Psoas muscle (tissue), 8 donors: ENCODE measurements at regions of chr3 and their contacts with region 1.

Region 1: DNA sequence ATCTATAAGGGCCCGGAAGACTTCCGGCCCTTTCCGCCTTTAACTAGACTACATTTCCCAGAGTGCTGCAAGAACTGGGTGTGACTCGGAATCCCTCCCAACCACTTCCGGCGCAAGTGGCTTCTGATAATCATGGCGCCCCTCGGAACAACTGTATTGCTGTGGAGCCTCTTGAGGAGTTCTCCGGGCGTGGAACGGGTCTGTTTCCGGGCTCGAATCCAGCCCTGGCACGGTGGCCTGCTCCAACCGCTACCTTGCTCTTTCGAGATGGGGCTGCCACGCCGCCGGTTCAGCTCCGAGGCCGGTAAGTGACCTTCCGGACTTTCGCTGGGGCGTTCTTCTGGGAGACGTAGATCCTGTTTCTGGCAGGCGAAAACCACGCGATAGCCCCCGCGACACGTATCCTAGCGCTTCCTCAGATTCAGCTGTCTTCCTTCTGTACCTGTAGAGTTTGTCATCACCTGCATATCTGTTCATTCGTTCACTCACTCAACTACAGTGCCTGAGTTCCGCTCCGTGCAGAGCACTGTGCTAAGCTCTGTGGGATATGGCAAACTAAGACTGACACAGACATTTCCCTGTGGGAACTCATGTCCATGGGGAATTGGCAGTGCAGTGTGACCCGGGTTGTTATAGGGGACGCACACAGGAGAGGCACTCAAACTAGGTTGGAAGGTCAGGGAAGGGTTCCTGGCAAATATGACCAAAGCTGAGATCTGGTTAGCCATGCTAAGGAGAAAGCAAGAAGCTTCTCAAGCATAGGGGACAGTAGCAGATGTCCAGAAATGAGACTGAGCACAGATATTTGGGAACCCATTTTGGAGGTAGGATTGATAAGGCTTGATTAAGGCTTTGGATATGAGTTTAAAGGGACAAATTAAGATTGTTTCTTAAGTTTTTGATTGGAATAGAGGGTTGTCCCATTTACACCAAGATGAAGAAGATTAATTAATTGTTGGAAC is at the start of gene MRPS22:
- DNase-seq: peak; percentile 79 to 88
- ATAC-seq: peak; percentile 96 to 100 (median 98)
- H3K4me3 ChIP-seq: peak within 1 kb of the TSS; percentile 99
- H3K27ac ChIP-seq: peak within 1 kb of the TSS; percentile 93
- H3K4me1 ChIP-seq: peaks cover 15% of the 10 kb centered on the region
- H3K27me3 ChIP-seq: no peaks in the 10 kb centered on the region
- CTCF ChIP-seq: no peak
- total RNA-seq, gene MRPS22: 67.4 to 108 (median 81.1) TPM

Region 2: DNA sequence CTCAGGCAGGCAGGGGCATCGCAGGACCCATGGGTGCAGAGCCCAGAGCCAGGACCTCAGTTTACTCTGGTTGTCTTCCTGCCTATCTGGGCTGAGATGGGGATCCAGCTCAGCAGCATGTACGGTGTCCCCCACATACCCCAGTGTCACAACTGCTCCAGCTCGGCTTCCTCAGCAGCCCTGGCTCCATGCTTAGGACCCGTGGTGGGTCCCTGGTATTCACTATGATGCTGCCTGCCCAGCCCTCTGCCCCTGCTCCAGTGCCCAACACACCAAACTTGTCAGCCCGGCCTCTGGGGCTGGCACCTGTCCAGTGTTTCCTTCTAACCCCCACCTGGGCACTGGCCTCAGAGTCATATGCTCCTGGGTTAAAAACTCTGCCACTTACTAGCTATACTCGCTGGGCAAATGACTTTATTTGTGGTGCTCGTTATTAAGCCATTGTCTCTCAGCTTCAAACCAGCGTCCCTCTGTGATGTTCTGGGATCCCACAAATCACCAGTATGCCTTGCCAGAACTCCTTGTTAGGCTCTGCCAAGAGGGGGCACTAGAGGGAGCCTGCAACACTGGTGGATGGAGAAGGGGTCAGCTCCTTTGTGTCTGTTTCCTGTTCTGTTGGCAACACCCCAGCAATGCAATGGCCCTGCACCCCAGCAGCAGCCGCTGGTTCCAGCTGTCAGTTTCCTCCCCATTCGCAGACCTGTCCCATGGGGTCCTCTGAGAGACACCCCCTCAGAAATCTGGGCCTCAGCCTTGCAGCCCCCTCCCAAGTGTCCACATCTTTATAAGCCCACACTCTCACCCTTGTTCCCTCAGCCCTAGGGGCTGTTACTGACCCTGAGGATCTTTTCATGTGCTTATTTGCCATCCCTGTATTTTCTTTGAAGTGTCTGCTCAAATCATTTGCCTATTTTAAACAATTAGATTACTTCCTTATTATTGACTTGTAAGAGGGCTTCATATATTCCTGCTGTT is 24.5 kb before region 1 on chr3:
- intact Hi-C with region 1: no loop called
- DNase-seq: no peak
- ATAC-seq: no peak
- H3K4me3 ChIP-seq: no peak overlapping the region
- H3K27ac ChIP-seq: no peak overlapping the region
- H3K4me1 ChIP-seq: no peaks in the 10 kb centered on the region
- H3K27me3 ChIP-seq: no peaks in the 10 kb centered on the region
- CTCF ChIP-seq: no peak

Region 3: DNA sequence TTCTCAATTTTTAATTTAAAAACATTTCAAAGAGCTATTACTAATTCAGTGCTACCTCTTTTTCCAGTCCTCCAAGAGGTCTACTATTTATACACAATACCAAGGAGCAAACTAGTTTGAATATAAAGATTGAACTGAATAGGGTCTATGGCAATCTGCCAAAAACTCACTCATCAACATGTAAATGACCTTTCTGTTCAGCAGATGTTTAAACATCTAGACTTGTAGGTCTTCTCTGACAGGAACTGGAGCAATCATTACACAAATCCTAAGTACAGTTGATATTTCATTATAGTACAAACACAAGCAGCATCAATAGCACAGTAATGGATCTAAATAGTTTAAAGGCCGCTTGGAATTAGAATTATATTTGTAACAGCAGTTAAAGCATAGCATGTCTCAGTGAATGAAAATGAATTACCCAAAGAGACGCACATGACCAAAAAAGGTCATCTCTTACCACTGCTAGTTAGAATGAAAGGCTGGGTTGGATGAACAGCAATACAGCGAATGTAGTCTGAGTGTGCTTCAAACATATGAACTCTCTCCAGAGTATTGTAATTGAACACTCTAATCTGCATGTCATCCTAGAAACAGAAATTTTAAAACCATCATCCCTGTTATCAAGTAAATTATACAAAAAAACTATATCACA is 34.5 kb after region 1 on chr3:
- intact Hi-C with region 1: loop called in 1 of 2 experiments (anchors 5 kb)
- DNase-seq: no peak
- ATAC-seq: no peak
- H3K4me3 ChIP-seq: no peak overlapping the region
- H3K27ac ChIP-seq: no peak overlapping the region
- H3K4me1 ChIP-seq: no peaks in the 10 kb centered on the region
- H3K27me3 ChIP-seq: no peaks in the 10 kb centered on the region
- CTCF ChIP-seq: no peak

Region 4: DNA sequence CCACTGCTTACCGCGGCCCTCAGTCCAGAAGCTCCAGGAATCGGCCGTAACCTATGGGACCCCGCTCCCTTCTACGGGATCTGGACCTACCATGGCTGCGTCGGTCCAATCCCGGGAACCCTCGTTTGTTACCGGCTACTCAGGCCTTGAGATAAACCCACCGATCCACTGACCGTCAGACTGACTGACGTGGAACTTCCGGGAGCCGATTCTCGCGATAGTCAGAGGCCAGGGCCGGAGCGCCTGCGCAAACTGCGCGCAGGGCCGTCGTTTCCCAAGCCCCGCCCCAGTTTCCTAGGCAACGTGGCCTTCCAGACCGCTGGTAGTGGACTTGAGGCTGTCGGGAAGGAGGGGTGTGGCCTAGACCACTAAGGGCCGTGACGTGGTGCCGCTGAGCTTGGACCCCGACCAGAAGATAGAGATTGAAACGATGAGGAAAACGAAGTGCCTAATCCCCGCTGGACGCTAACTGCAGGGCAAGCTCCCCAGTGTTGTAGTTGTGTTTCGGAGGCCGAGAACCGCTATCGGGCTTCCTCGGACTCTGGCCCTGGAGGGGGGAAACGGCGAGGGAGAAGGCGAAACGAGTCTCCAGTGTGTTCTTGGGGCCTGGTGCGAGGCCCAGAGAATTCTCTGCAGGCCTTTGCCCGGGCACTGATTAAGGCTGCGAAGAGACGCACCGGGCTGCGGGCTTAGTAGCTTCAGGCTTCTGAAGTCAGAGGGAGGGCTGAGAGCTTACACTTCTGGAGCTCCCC is 45.5 kb after region 1 on chr3 and contains the start of gene COPB2:
- intact Hi-C with region 1: loop called (anchors 2 to 5 kb)
- DNase-seq: peak; percentile 99 to 100
- ATAC-seq: peak; percentile 98 to 100 (median 99)
- H3K4me3 ChIP-seq: peak within 1 kb of the TSS; percentile 87
- H3K27ac ChIP-seq: peak within 1 kb of the TSS; percentile 91
- H3K4me1 ChIP-seq: peaks cover 51% of the 10 kb centered on the region
- H3K27me3 ChIP-seq: no peaks in the 10 kb centered on the region
- CTCF ChIP-seq: no peak
- total RNA-seq, gene COPB2: 36.1 to 41.2 (median 38.2) TPM